ENCODE measurements at regions of chr1 and their contacts with region 1.

Region 1: GRCh38 chr1:227946624-227947385 is 927 bp downstream of the WNT9A start:
- DNase-seq: peak; percentile 85
- H3K4me3 ChIP-seq: peak overlapping the region; percentile 72 to 86 (median 78)
- H3K27ac ChIP-seq: peak overlapping the region; percentile 50
- H3K4me1 ChIP-seq: peaks cover 30% of the 10 kb centered on the region
- H3K27me3 ChIP-seq: no peaks in the 10 kb centered on the region
- CTCF ChIP-seq: peak; percentile 51 to 74

Region 2: GRCh38 chr1:227489572-227489971 is 457.2 kb before region 1 on chr1:
- CTCF ChIA-PET with region 1: no interaction called
- dilution Hi-C with region 1: no loop called
- in situ Hi-C with region 1: loop called in 1 of 2 experiments (anchors 25 kb)
- intact Hi-C with region 1: no loop called
- DNase-seq: no peak
- H3K4me3 ChIP-seq: no peak overlapping the region
- H3K27ac ChIP-seq: no peak overlapping the region
- H3K4me1 ChIP-seq: no peaks in the 10 kb centered on the region
- H3K27me3 ChIP-seq: no peaks in the 10 kb centered on the region
- CTCF ChIP-seq: no peak

Region 3: GRCh38 chr1:227762233-227762911 is 184.4 kb before region 1 on chr1:
- CTCF ChIA-PET with region 1: no interaction called
- dilution Hi-C with region 1: loop called (anchors 25 kb)
- in situ Hi-C with region 1: loop called (anchors 5 to 10 kb)
- intact Hi-C with region 1: loop called (anchors 1 kb)
- DNase-seq: peak; percentile 74
- H3K4me3 ChIP-seq: no peak overlapping the region
- H3K27ac ChIP-seq: no peak overlapping the region
- H3K4me1 ChIP-seq: peaks cover 44% of the 10 kb centered on the region
- H3K27me3 ChIP-seq: no peaks in the 10 kb centered on the region
- CTCF ChIP-seq: peak; percentile 74 to 92

Region 4: DNA sequence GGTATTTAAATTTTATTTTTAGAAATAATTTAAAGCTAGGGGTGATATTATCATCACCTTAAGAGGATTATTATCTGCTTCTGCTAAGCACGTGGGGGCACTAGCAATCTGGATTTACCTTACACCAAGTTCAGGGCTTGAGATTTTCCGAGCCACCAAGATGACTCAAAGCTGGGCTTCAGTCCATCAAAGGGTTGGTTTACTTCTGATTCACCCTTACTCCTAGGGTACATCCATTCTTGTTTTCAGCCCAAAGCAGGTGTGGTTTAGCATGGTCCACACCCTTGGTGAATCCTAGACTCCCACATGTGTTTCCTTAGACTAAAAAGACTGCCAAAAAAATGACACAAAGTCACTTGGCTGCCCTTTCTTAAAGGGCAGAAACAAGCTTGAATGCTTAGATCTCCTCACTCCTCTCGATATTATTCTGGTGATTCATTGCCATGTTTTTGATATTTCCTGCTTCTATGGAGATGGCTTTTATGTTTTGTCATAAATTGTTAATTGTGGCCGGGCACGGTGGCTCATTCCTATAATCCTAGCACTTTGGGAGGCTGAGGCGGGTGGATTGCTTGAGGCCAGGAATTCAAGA is 141.1 kb before region 1 on chr1:
- CTCF ChIA-PET with region 1: interaction called, 3 read pairs
- dilution Hi-C with region 1: no loop called
- in situ Hi-C with region 1: no loop called
- intact Hi-C with region 1: loop called (anchors 1 kb)
- DNase-seq: peak; percentile 99
- H3K4me3 ChIP-seq: no peak overlapping the region
- H3K27ac ChIP-seq: peak overlapping the region; percentile 72
- H3K4me1 ChIP-seq: peaks cover 11% of the 10 kb centered on the region
- H3K27me3 ChIP-seq: no peaks in the 10 kb centered on the region
- CTCF ChIP-seq: peak; percentile 23 to 43

Measured in mammary epithelial cell (primary cell).